PC-9 (cell line): ENCODE measurements at regions of chr1 and their contacts with region 1.

Region 1: DNA sequence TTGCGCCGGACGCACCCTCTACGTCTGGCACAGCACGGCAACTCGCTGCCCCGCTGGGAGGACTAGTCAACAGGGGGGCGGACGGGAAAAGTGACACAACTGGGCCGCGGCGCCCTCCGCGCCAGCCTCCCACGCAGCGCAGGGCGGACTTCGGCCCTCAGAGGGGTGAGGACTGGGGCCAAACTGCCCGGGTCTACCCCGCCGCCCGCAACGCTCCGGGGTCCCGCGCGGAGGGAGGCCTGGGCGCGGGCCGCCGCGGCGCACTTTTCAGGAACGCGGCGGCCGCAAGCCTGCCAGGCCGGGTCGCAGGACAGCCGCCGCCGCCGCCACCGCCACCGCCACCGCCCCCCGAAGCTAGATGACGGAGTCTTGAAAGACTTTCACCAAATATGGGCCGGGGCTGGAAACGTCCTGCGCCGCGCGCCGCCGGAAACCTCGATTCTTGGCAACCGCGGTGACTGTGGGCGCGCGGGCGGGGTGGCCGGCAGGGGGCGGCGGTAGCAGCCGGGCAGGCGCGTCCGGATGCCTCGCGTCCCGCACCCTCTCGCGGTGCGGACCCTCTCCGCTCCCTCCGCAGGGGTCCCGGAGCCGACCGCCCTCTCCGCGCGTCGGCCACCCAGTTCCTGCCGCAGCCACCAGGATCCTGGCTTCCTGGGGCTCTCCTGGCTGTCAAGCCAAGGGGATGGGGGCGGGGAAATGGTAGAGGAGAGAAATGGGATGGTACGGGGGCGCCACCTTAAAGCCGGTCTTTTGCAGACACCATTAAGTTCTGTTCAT is 3.7 kb upstream of the CCN1 start:
- DNase-seq: peak; percentile 74 to 83
- H3K4me3 ChIP-seq: peak overlapping the region; percentile 74
- H3K27ac ChIP-seq: peak overlapping the region; percentile 47
- H3K4me1 ChIP-seq: peaks cover 50% of the 10 kb centered on the region
- H3K27me3 ChIP-seq: no peaks in the 10 kb centered on the region
- CTCF ChIP-seq: peak; percentile 79

Region 2: DNA sequence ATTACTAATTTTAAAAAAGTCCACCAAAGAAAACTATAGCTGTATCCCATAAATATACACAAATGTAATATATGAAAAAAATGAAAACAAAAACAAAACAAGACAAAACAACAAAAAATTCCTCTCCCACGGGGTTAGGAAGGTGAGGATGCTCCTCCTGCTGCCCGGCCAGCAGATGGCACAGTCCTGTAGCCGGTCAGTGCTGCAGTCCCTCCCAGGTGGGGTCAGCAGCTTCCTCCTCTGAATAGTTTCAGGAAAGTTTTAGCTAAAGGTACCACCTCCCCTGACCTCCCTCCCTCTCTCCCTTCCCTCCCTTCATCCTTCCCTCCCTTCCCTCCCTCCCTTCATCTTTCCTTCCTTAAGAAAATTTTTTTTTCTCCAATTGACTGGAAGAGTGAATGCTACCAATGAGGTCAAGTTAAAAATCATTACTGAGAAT is 232.6 kb before region 1 on chr1:
- CTCF ChIA-PET with region 1: interaction called, 4 read pairs
- POLR2A ChIA-PET with region 1: interaction called, 10 read pairs
- intact Hi-C with region 1: loop called (anchors 2 kb)
- DNase-seq: peak; percentile 45 to 47
- H3K4me3 ChIP-seq: no peak overlapping the region
- H3K27ac ChIP-seq: peak overlapping the region; percentile 22; the same call in 1 of the 2 replicates
- H3K4me1 ChIP-seq: peaks cover 24% of the 10 kb centered on the region
- H3K27me3 ChIP-seq: no peaks in the 10 kb centered on the region
- CTCF ChIP-seq: peak; percentile 84

Region 3: DNA sequence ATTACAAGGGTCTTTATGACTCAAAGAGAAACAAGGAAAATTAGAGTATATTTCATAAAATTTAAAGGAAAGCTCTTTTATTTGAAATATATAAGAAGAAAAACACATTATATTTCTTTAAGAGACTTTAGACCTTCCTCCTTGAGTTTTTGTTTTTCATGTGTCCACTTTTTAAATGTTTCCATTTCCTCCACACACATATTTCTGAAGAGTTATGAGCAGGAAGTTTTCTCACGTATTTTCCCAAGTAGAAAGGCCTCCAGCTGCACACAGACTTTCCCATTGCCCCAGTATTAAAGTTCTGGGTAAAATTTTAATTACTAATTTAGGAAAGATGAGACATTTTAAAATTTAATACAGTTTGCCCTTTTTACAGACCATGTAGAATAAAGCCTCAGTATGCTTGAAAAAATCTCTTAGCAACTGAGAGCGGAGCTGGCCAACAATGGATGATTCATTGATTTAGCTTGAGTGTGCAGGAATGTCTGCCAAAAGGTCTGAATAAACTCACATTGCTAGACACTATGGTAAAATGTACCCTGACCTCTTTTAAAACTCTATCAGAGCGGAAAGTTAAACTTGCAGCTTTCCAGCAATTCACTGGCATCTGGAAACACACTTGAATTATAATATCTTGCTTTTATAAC is 169.8 kb before region 1 on chr1:
- CTCF ChIA-PET with region 1: no interaction called
- POLR2A ChIA-PET with region 1: interaction called, 9 read pairs
- intact Hi-C with region 1: loop called (anchors 5 kb)
- DNase-seq: peak; percentile 47 to 87
- H3K4me3 ChIP-seq: no peak overlapping the region
- H3K27ac ChIP-seq: peak overlapping the region; percentile 28
- H3K4me1 ChIP-seq: peaks cover 20% of the 10 kb centered on the region
- H3K27me3 ChIP-seq: no peaks in the 10 kb centered on the region
- CTCF ChIP-seq: no peak

Region 4: GRCh38 chr1:85464497-85465098 is 112.2 kb before region 1 on chr1:
- CTCF ChIA-PET with region 1: interaction called, 3 read pairs
- POLR2A ChIA-PET with region 1: interaction called, 9 read pairs
- intact Hi-C with region 1: loop called (anchors 1 kb)
- DNase-seq: peak; percentile 48 to 61
- H3K4me3 ChIP-seq: peak overlapping the region; percentile 95
- H3K27ac ChIP-seq: peak overlapping the region; percentile 12; the same call in 1 of the 2 replicates
- H3K4me1 ChIP-seq: peaks cover 41% of the 10 kb centered on the region
- H3K27me3 ChIP-seq: no peaks in the 10 kb centered on the region
- CTCF ChIP-seq: no peak

Region 5: DNA sequence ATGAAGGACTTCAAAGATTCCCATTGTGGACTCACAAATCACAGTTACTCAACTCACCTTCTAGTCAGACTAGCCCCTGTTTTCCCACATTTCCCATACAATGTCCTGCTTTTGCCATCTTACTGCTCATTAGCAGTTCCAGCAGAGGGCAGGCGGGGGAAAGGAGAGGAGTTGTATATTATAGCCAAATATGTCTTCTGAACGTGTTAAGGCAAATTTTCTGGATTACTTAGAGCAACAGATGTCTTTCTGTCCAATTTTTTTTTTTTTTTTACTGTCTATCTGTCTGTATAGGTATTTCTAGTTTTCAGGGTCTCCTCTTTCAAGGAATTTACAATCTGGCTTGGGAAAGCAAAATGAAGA is 81.9 kb before region 1 on chr1:
- CTCF ChIA-PET with region 1: interaction called, 4 read pairs
- POLR2A ChIA-PET with region 1: interaction called, 6 read pairs
- intact Hi-C with region 1: loop called (anchors 1 kb)
- DNase-seq: peak in 1 of 2 experiments; percentile 46
- H3K4me3 ChIP-seq: no peak overlapping the region; the same call in 1 of the 2 replicates
- H3K27ac ChIP-seq: peak overlapping the region; percentile 51
- H3K4me1 ChIP-seq: peaks cover 35% of the 10 kb centered on the region
- H3K27me3 ChIP-seq: no peaks in the 10 kb centered on the region
- CTCF ChIP-seq: no peak